Activated naive CD4-positive, alpha-beta T cell treated with anti-CD3 and anti-CD28 coated beads for 36 hours (primary cell): ENCODE measurements at regions of chr13 and their contacts with region 1.

Region 1: DNA sequence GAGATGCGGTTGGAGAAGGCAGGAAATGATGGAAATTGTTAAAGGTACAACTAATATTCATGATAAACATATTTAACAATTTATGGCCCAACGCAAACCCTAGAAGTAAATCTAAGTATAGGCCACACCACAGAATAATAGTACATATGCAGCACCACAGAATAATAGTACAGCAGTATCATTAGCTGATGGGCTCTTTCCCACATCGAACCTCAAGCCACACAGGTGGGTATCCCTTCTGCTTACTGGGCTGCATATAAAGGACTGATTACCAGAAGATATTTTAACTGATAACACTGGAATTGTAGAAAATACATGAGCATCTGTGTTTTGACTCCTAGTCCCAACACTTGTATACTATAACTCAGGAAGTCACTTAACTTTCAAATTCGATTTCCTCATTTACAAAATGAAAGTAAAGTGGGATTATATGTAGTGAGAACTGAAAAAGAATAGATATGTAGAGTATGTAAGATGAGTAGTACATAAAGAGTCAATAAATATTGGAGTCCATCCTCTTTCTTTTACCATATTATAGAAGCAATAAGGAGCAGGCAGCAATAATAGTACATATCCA is 91.5 kb downstream of the TSC22D1 start:
- DNase-seq: no peak
- H3K4me3 Mint-ChIP-seq: peak overlapping the region; percentile 50
- H3K27ac Mint-ChIP-seq: no peak overlapping the region
- H3K4me1 Mint-ChIP-seq: peaks cover 9% of the 10 kb centered on the region
- H3K27me3 Mint-ChIP-seq: no peaks in the 10 kb centered on the region

Region 2: DNA sequence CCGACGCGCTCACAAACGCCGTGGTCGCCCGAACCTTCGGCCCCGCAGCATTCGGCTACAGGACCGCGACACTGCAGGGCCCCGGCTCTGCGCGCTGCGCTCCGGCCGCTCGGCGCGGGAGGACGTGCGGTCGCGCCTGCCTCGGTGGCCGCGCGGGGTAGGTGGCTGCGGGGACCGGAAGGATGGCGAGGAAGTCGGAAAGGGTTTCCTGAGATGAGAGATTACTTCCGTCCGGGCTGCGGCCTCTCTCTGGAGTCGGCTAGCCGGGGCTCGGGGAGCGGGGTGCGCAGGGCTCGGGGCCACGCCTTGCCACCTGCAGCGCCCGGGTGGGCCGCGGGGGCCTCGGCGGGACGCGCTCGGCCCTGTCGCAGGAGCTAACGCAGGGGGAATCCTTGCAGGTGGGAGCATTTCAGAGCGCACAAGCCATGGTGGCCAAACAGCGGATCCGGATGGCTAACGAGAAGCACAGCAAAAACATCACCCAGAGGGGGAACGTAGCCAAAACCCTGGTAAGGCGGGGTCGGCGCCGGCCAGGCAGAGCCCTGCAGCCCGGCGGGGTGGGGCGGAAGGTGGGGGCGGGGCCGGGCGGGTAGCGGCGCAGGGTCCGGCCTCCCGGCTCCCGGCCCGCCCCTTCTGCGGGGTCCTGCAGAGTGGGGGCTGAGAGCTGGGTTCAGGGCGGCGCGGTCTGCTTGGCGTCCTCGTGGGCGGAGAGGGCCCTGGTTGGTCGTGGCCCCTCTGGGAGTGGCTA is 110.9 kb before region 1 on chr13 and contains the start of gene SERP2:
- CTCF ChIA-PET with region 1: no interaction called
- intact Hi-C with region 1: no loop called
- DNase-seq: no peak
- H3K4me3 Mint-ChIP-seq: peak within 1 kb of the TSS; percentile 42
- H3K27ac Mint-ChIP-seq: no peak within 1 kb of the TSS
- H3K4me1 Mint-ChIP-seq: peaks cover 11% of the 10 kb centered on the region
- H3K27me3 Mint-ChIP-seq: peaks cover 47% of the 10 kb centered on the region
- total RNA-seq, gene SERP2: 0.38 to 0.64 TPM

Region 3: DNA sequence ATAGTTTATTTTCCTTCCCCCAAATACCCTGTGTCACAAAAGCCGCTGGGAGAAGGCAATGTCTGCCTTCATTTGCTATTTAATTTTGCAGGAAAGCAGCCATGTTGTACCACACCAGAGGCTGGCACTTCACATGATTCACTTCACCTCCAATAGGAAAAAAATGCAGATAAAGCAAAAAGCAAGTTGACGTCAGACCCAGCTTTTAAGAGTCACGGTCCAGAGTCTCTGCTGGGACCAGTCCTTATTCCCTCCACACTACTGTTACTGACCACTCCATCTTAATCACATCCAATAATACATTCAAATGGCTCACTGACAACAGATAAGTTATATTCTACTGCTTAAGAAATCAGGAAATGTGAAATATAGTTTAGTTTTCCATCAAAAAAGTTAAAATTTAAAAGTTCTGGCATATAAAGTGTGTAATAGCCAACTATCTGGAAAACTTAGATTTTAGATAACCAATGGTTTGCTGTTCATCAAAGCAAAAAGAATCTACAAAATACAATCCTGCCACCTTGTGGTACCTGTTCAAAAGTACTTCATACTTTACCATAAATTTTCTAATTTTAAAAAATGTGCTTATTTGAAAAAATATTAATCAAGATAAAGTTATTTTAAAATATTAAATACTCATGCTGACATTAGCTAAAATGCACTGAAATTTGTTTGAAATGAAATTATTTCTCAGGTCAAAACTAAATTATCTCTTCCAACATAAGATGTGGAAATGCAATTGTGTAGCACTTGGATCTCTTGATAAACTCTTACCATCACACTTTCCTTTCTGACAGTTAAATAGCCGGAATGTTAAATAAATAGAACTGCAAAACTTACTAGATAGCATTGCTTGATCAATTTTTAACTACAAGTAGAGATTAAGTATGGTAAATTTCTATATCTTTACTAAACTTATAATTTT is 13.8 kb before region 1 on chr13:
- CTCF ChIA-PET with region 1: interaction called, 15 read pairs
- intact Hi-C with region 1: no loop called
- DNase-seq: no peak
- H3K4me3 Mint-ChIP-seq: no peak overlapping the region
- H3K27ac Mint-ChIP-seq: no peak overlapping the region
- H3K4me1 Mint-ChIP-seq: no peaks in the 10 kb centered on the region
- H3K27me3 Mint-ChIP-seq: no peaks in the 10 kb centered on the region

Region 4: DNA sequence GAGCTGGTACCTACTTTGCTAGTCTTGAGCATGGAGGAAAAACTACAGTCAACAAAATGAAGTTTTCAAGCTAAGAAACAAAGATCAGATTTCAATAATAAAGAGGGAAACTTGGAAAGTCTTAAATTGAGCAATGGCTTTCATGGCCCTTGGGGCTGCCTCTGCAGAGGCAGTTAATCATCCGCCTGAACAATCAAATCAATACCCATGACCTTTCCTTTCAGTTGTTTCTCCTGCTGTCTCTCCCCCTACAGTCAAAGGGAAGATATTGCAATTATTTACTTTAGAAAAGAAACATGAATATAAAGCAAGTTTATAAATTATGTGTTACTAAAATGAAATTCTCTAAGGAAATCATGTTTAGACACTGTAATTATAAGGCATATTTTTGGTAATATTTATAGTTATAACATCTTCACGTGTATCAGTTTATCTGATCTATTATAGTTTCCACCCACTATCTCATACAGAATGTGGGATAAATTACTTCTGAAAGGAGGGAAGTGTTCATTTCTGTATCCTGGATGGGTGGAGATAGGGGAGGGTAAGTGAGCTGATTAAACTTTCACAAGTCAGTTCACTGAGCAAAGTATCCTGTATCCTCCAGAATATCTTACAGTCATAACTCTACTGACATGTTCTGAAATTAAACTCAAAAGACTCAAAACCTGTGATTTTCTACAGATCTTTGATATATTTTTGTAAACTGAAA is 163.9 kb after region 1 on chr13:
- CTCF ChIA-PET with region 1: interaction called, 8 read pairs
- intact Hi-C with region 1: loop called (anchors 1 kb)
- DNase-seq: no peak
- H3K4me3 Mint-ChIP-seq: no peak overlapping the region
- H3K27ac Mint-ChIP-seq: no peak overlapping the region
- H3K4me1 Mint-ChIP-seq: peaks cover 14% of the 10 kb centered on the region
- H3K27me3 Mint-ChIP-seq: peaks cover 22% of the 10 kb centered on the region

Region 5: DNA sequence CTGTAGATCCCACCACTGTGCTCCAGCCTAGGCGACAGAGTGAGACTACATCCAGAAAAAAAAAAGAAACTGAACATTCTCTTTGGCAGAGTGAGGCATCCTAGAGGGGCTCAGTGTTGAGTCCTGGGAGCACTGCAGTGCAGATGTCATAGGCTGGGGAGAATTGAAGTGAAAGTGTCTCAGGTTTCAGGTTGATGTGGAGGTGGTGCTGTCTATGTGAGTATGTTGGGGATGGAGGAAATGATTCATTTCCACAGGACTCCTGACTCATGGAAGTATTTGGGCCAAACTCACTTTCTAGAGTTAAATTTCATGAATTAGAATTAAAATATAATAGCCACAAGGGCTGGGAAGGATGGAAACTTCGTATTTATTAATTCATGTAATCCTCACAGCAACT is 225.9 kb after region 1 on chr13:
- CTCF ChIA-PET with region 1: interaction called, 4 read pairs
- intact Hi-C with region 1: loop called (anchors 10 kb)
- DNase-seq: peak; percentile 53
- H3K4me3 Mint-ChIP-seq: no peak overlapping the region
- H3K27ac Mint-ChIP-seq: no peak overlapping the region
- H3K4me1 Mint-ChIP-seq: peaks cover 11% of the 10 kb centered on the region
- H3K27me3 Mint-ChIP-seq: peaks cover 4% of the 10 kb centered on the region

Region 6: DNA sequence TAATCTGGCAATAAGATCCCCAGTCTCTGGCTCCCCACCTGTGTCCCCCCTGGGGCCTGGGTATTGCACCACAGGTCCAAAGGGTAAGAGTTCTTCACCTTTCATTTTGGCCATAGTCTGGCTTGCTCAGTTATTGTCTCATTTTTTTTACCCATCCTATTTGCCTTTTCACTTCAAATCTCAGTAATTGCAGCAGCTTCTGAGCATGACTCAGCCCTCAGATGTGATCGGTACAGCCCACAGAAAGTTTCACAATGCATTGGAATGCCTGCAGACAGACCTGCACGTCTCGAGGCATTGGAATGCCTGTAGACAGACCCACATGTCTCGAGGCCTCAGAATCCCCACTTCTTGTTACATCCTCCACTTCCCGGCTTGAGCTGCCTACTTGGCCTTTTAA is 331.0 kb after region 1 on chr13:
- CTCF ChIA-PET with region 1: interaction called, 5 read pairs
- intact Hi-C with region 1: loop called (anchors 1 kb)
- DNase-seq: peak; percentile 66
- H3K4me3 Mint-ChIP-seq: no peak overlapping the region
- H3K27ac Mint-ChIP-seq: no peak overlapping the region
- H3K4me1 Mint-ChIP-seq: peaks cover 20% of the 10 kb centered on the region
- H3K27me3 Mint-ChIP-seq: peaks cover 17% of the 10 kb centered on the region

Region 7: DNA sequence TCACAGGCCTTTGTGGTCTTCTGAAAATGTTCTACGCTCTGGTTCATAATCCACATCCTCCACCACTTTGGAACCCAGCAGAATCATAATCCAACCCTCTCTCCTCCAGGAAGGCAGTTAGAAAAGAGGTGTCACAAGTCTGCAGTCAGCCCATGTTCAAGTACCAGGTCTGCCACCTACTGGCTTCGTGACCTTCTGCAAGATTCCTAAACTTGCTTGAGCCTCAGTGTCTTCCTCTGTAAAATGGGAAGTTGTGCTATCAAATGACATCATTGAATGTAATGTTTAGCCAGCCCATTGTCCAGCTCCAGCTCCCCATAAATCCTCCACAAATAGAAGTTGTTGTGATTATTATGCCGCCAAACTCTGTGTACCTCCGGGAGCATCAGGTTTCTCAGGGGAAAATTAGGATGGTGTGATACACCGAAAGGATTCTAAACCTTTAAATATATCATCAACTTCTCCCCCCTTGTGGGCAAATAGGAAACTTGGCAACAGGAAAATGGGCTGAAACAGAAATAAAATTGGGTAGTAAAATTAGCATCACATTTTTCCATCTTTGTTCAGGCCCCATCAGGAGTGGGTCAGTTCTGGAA is 394.9 kb after region 1 on chr13:
- CTCF ChIA-PET with region 1: interaction called, 15 read pairs
- intact Hi-C with region 1: loop called (anchors 1 kb)
- DNase-seq: peak; percentile 49
- H3K4me3 Mint-ChIP-seq: no peak overlapping the region
- H3K27ac Mint-ChIP-seq: no peak overlapping the region
- H3K4me1 Mint-ChIP-seq: no peaks in the 10 kb centered on the region
- H3K27me3 Mint-ChIP-seq: peaks cover 3% of the 10 kb centered on the region

Region 8: GRCh38 chr13:44969551-44970484 is 485.2 kb after region 1 on chr13:
- CTCF ChIA-PET with region 1: interaction called, 17 read pairs
- intact Hi-C with region 1: loop called (anchors 1 kb)
- DNase-seq: no peak
- H3K4me3 Mint-ChIP-seq: no peak overlapping the region
- H3K27ac Mint-ChIP-seq: no peak overlapping the region
- H3K4me1 Mint-ChIP-seq: no peaks in the 10 kb centered on the region
- H3K27me3 Mint-ChIP-seq: no peaks in the 10 kb centered on the region